AG04450 (cell line): ENCODE measurements at regions of chr2 and their contacts with region 1.

Region 1: GRCh38 chr2:133780099-133780839 is 212.0 kb upstream of the NCKAP5 start:
- DNase-seq: peak; percentile 60
- H3K4me3 ChIP-seq: no peak overlapping the region
- H3K27ac ChIP-seq: no peak overlapping the region
- H3K27me3 ChIP-seq: no peaks in the 10 kb centered on the region
- CTCF ChIP-seq: peak; percentile 84

Region 2: DNA sequence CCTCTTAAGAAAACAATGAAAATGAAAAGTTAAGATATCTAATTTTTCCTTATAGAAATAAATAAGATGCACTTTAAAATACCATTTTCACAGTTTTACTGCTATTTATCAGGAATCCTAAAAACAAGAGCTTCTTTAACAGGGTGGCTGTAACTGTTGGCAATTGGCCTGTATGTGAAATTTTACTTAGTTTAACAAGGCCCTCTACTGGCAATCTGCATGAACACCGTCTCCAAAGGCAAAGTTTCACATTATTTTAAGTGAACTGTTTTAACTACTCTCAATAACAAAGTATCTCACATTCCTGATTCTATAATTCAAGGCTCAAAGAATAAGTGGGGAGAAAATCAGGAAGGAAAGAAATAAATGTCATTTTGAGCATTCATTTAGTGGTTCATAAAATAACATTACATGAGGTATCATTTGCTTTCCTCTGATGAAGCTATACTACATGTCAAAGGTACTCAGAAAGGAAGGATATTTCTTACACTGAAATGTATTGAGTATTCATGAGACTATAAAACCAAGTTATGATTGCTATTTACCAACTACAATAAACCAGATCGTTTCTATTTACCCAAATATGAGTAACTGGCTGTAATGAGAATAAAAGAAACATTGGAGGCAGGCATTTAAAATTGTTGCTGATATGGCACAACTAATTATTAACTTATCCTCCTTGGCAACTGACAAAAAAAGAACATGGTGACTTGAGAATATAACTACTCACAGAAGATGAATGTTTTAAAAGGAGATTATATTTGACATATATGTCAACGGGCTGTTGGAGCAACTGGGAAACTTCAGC is 219.0 kb before region 1 on chr2:
- CTCF ChIA-PET with region 1: interaction called, 33 read pairs
- POLR2A ChIA-PET with region 1: no interaction called
- DNase-seq: peak; percentile 71
- H3K4me3 ChIP-seq: no peak overlapping the region
- H3K27ac ChIP-seq: no peak overlapping the region
- H3K27me3 ChIP-seq: no peaks in the 10 kb centered on the region
- CTCF ChIP-seq: peak; percentile 79

Region 3: DNA sequence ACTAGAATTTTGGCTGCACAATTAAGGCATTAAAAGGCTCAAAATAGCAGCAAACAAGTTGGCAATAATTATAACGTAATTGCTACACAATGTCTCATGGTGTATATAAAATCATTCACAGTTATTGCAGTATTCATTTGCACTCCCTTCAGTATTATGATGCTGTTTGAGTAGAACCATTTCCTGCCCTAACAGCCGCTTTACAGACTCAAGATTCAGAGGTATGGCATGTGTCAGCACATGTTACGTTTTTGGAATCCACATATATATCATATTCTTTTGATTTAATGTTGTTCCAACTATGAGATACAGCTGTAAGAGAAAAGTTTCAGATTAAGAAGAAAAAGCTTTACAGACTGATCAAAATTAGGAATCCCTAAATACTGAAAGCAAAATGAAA is 155.7 kb before region 1 on chr2:
- CTCF ChIA-PET with region 1: interaction called, 12 read pairs
- POLR2A ChIA-PET with region 1: no interaction called
- DNase-seq: no peak
- H3K4me3 ChIP-seq: no peak overlapping the region
- H3K27ac ChIP-seq: no peak overlapping the region
- H3K27me3 ChIP-seq: no peaks in the 10 kb centered on the region
- CTCF ChIP-seq: no peak

Region 4: DNA sequence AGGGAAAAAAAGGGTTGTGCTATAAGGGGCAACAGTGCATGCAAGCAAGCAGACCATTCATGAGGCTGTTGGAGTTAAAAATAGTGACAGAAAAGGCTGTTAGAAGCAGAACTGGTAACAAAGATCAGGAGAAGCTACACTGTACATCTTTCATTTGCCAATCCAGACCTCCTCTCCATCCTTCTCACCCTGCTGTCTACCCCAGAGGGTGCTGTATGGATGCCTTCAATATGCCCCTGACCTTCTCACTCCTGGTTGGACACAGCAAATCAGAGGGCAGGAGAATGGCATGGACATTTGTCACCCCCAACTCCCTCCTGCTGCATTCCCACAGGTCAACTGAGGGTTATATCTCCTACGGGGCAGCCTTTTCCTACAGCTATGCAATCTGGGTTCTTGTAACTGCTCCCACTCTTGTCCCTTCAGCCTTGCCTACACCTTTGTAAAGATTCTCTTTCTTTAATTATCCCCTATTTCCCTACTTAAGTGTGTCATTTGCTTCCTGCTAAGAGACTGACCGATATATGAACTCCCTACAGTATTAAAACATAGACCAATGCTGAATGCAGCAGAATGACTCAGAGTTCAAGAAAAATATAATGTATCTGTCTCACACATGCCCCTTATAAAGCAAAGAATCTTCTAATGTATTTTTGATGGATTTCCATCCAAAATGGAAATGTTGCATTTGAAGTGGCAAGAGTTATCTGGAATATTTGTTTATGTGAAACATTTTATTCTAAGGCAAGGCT is 42.9 kb before region 1 on chr2:
- CTCF ChIA-PET with region 1: no interaction called
- POLR2A ChIA-PET with region 1: no interaction called
- DNase-seq: no peak
- H3K4me3 ChIP-seq: no peak overlapping the region
- H3K27ac ChIP-seq: no peak overlapping the region
- H3K27me3 ChIP-seq: no peaks in the 10 kb centered on the region
- CTCF ChIP-seq: no peak

Region 5: DNA sequence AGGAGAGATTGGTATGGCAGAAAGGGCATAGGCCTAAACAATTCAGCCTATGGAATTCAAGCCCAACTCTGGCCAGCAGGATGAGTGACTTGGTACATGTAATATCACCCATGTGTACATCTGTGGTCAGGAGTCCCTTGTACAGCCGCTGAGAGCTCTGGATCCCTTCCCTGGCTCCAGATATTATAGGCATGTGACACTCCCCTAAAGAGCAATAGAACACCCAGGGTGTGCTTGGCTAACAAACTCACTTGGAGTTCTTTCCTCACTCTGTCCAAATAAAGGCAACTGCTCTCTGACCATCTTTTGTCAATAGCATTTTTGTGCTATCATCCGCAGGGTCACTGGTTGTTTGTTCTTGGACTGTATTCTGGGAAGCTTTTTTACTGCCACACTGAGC is 14.6 kb before region 1 on chr2:
- CTCF ChIA-PET with region 1: interaction called, 42 read pairs
- POLR2A ChIA-PET with region 1: no interaction called
- DNase-seq: no peak
- H3K4me3 ChIP-seq: no peak overlapping the region
- H3K27ac ChIP-seq: no peak overlapping the region
- H3K27me3 ChIP-seq: no peaks in the 10 kb centered on the region
- CTCF ChIP-seq: no peak

Region 6: DNA sequence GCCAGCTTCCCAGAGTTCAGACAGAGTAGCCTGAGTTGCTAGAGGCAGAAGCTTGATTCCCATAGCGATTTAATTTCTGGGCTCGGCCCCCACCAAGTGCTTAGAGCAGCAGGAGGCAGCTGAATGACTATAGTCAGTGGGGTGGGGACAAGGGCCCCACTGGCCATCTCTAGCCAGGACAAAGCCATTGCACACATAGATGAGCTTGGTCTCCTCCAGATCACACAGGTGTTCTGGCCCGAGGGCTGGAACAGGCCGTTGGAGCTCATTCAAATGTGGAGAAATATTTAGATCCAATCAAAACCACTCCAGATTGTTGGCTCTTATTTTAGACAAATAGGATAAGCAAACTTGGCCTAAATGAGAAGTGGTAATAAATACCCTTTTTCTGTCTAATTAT is 75.3 kb after region 1 on chr2:
- CTCF ChIA-PET with region 1: no interaction called
- POLR2A ChIA-PET with region 1: no interaction called
- DNase-seq: no peak
- H3K4me3 ChIP-seq: no peak overlapping the region
- H3K27ac ChIP-seq: no peak overlapping the region
- H3K27me3 ChIP-seq: peaks cover 2% of the 10 kb centered on the region
- CTCF ChIP-seq: no peak